Natural killer cell (primary cell): ENCODE measurements at regions of chr3 and their contacts with region 1.

Region 1: GRCh38 chr3:138923531-138923994 is 23.4 kb downstream of the FOXL2 start:
- DNase-seq: peak; percentile 77 to 92
- ATAC-seq: peak; percentile 89 to 99 (median 98)
- H3K4me3 ChIP-seq: no peak overlapping the region
- H3K4me3 Mint-ChIP-seq: no peak overlapping the region
- H3K27ac ChIP-seq: no peak overlapping the region
- H3K27ac Mint-ChIP-seq: no peak overlapping the region
- H3K4me1 ChIP-seq: peaks cover 3% of the 10 kb centered on the region
- H3K4me1 Mint-ChIP-seq: peaks cover 0 to 4% of the 10 kb centered on the region in 2 donors
- H3K27me3 ChIP-seq: no peaks in the 10 kb centered on the region
- H3K27me3 Mint-ChIP-seq: peaks cover 8 to 15% of the 10 kb centered on the region in 2 donors
- CTCF ChIP-seq: peak; percentile 83

Region 2: GRCh38 chr3:138417559-138417982 is 506.0 kb before region 1 on chr3:
- intact Hi-C with region 1: loop called (anchors 1 kb)
- DNase-seq: peak; percentile 41 to 78
- ATAC-seq: peak; percentile 60 to 88 (median 72)
- H3K4me3 ChIP-seq: no peak overlapping the region
- H3K4me3 Mint-ChIP-seq: no peak overlapping the region
- H3K27ac ChIP-seq: no peak overlapping the region
- H3K27ac Mint-ChIP-seq: no peak overlapping the region
- H3K4me1 ChIP-seq: no peaks in the 10 kb centered on the region
- H3K4me1 Mint-ChIP-seq: no peaks in the 10 kb centered on the region
- H3K27me3 ChIP-seq: no peaks in the 10 kb centered on the region
- H3K27me3 Mint-ChIP-seq: peaks cover 8 to 14% of the 10 kb centered on the region in 2 donors
- CTCF ChIP-seq: peak; percentile 82

Region 3: GRCh38 chr3:138479438-138479863 is 444.1 kb before region 1 on chr3:
- intact Hi-C with region 1: loop called (anchors 1 kb)
- DNase-seq: peak in 1 of 2 donors; percentile 40
- ATAC-seq: no peak
- H3K4me3 ChIP-seq: no peak overlapping the region
- H3K4me3 Mint-ChIP-seq: no peak overlapping the region
- H3K27ac ChIP-seq: no peak overlapping the region
- H3K27ac Mint-ChIP-seq: no peak overlapping the region
- H3K4me1 ChIP-seq: no peaks in the 10 kb centered on the region
- H3K4me1 Mint-ChIP-seq: no peaks in the 10 kb centered on the region
- H3K27me3 ChIP-seq: no peaks in the 10 kb centered on the region
- H3K27me3 Mint-ChIP-seq: no peaks in the 10 kb centered on the region
- CTCF ChIP-seq: peak; percentile 44

Region 4: GRCh38 chr3:138694287-138695007 is 229.1 kb before region 1 on chr3:
- intact Hi-C with region 1: loop called (anchors 1 kb)
- DNase-seq: no peak
- ATAC-seq: no peak
- H3K4me3 ChIP-seq: no peak overlapping the region
- H3K4me3 Mint-ChIP-seq: no peak overlapping the region
- H3K27ac ChIP-seq: no peak overlapping the region
- H3K27ac Mint-ChIP-seq: no peak overlapping the region
- H3K4me1 ChIP-seq: no peaks in the 10 kb centered on the region
- H3K4me1 Mint-ChIP-seq: no peaks in the 10 kb centered on the region
- H3K27me3 ChIP-seq: no peaks in the 10 kb centered on the region
- H3K27me3 Mint-ChIP-seq: no peaks in the 10 kb centered on the region
- CTCF ChIP-seq: no peak

Region 5: GRCh38 chr3:138875754-138876664 is 47.6 kb before region 1 on chr3:
- intact Hi-C with region 1: no loop called
- DNase-seq: no peak
- ATAC-seq: peak in 2 of 3 donors; percentile 58 to 77
- H3K4me3 ChIP-seq: no peak overlapping the region
- H3K4me3 Mint-ChIP-seq: peak overlapping the region; percentile 6
- H3K27ac ChIP-seq: no peak overlapping the region
- H3K27ac Mint-ChIP-seq: peak overlapping the region in 1 of 2 donors; percentile 51
- H3K4me1 ChIP-seq: no peaks in the 10 kb centered on the region
- H3K4me1 Mint-ChIP-seq: peaks cover 7 to 11% of the 10 kb centered on the region in 2 donors
- H3K27me3 ChIP-seq: no peaks in the 10 kb centered on the region
- H3K27me3 Mint-ChIP-seq: peaks cover 0 to 3% of the 10 kb centered on the region in 2 donors
- CTCF ChIP-seq: no peak